Transverse colon (tissue), 4 donors: ENCODE measurements at regions of chr21 and their contacts with region 1.

Region 1: GRCh38 chr21:34874684-34875513 is 174.2 kb downstream of the RUNX1 start:
- DNase-seq: no peak
- H3K4me3 ChIP-seq: no peak overlapping the region
- H3K27ac ChIP-seq: peak overlapping the region; percentile 16 to 40 (median 27)
- H3K4me1 ChIP-seq: peaks cover 0 to 33% (median 22%) of the 10 kb centered on the region in 4 donors
- H3K27me3 ChIP-seq: no peaks in the 10 kb centered on the region
- CTCF ChIP-seq: no peak
- EP300 ChIP-seq: no peak
- POLR2A ChIP-seq: no peak

Region 2: GRCh38 chr21:34807146-34807880 is 67.6 kb before region 1 on chr21:
- in situ Hi-C with region 1: loop called in 1 of 4 experiments (anchors 10 kb)
- intact Hi-C with region 1: no loop called
- DNase-seq: no peak
- H3K4me3 ChIP-seq: no peak overlapping the region
- H3K27ac ChIP-seq: peak overlapping the region; percentile 52 to 65 (median 60)
- H3K4me1 ChIP-seq: peaks cover 0 to 31% (median 15%) of the 10 kb centered on the region in 4 donors
- H3K27me3 ChIP-seq: no peaks in the 10 kb centered on the region
- CTCF ChIP-seq: no peak
- EP300 ChIP-seq: no peak
- POLR2A ChIP-seq: no peak